BJ (cell line): ENCODE measurements at regions of chr11 and their contacts with region 1.

Region 1: DNA sequence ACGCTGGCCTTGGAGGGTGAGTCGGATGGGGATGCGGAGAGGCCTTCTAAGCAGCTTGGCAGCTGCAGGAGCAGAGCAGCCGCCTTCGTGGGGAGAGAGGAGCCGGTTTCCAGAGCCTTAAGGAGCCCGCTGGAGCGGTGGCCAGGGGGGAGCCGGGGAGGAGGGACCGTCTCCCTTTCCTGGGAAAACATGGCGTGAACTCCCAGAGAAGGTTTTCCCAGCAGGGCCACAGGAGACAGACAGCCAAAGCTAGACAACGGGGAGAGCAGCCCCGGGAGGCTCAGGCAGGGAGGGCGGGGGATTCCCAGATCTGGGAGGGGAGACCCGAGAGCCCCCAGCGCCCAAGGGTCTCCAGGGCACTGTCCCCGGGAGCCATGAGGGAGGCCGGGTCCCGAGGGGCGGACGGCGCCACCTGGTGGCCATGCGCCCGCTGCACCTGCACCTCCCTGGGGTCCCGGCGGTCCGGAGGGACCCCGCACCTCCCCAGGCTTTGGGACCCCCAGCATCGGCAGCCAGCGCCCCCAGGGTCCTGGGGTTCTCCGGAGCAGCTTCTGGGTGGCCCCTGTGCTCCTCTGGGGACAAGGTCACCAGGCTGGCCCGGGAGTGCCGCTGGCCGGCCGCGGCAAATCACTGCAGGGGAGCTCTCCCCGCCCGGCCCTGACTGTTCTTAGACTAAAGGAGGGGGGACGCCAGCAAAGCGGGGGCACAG is 2.4 kb upstream of the SYT8 start:
- DNase-seq: no peak
- H3K4me3 ChIP-seq: no peak overlapping the region
- H3K27me3 ChIP-seq: peaks cover 2% of the 10 kb centered on the region; the same call in 1 of the 2 replicates
- CTCF ChIP-seq: peak; percentile 95

Region 2: DNA sequence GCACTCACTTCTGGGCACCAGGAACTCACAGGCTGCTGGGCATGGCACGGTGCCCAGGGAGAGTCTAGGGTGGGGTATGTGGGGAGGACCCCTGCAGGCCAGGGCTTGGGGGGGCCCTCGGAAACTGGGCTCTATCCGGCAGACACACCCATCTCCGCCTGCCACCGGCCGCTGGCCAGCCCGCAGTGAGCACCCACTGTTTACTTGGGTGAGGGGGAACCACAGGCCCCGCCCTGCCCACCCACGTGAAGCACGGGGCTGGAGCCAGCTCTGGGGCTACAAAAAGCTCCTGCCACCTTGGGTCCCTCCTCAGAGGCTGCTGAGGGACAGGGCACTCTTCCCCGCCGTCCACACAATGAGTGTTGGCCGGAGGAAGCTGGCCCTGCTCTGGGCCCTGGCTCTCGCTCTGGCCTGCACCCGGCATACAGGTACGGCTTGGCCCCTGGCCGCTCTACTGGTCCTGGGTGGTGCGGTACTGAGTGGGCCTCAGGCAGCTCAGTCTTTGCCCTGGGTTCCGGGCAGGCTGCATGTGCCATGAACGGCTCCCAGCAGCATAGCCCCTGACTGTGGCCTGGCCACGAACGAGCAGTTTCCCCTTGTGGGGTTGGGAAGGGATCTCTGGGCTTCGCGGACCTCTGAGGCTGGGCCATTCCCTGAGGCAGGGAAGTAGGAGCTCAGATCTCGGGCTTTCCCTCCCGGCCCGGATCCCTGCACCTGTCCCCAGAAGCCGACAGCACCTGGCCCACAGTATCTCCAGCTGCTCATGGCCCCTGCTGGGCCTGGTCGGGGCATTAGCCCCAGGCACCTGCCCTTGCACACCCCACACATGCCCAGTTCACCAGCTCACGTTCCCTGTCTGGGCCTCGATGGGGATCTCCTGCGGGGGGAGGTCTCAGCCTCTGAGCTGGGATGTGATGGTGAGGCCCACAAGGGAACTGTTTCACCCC is 674.4 kb before region 1 on chr11 and contains the start of gene MUC5AC:
- CTCF ChIA-PET with region 1: no interaction called
- POLR2A ChIA-PET with region 1: no interaction called
- DNase-seq: no peak
- H3K4me3 ChIP-seq: no peak within 1 kb of the TSS
- H3K27me3 ChIP-seq: no peaks in the 10 kb centered on the region
- CTCF ChIP-seq: no peak
- polyA plus RNA-seq, gene MUC5AC: not detected in 2 replicates

Region 3: GRCh38 chr11:1619449-1619848 is 212.9 kb before region 1 on chr11:
- CTCF ChIA-PET with region 1: no interaction called
- POLR2A ChIA-PET with region 1: no interaction called
- DNase-seq: no peak
- H3K4me3 ChIP-seq: no peak overlapping the region
- H3K27me3 ChIP-seq: peaks cover 2% of the 10 kb centered on the region
- CTCF ChIP-seq: no peak

Region 4: GRCh38 chr11:1701091-1701807 is 131.1 kb before region 1 on chr11:
- CTCF ChIA-PET with region 1: interaction called, 76 read pairs
- POLR2A ChIA-PET with region 1: interaction called, 4 read pairs
- DNase-seq: no peak
- H3K4me3 ChIP-seq: no peak overlapping the region
- H3K27me3 ChIP-seq: peaks cover 8% of the 10 kb centered on the region
- CTCF ChIP-seq: no peak

Region 5: DNA sequence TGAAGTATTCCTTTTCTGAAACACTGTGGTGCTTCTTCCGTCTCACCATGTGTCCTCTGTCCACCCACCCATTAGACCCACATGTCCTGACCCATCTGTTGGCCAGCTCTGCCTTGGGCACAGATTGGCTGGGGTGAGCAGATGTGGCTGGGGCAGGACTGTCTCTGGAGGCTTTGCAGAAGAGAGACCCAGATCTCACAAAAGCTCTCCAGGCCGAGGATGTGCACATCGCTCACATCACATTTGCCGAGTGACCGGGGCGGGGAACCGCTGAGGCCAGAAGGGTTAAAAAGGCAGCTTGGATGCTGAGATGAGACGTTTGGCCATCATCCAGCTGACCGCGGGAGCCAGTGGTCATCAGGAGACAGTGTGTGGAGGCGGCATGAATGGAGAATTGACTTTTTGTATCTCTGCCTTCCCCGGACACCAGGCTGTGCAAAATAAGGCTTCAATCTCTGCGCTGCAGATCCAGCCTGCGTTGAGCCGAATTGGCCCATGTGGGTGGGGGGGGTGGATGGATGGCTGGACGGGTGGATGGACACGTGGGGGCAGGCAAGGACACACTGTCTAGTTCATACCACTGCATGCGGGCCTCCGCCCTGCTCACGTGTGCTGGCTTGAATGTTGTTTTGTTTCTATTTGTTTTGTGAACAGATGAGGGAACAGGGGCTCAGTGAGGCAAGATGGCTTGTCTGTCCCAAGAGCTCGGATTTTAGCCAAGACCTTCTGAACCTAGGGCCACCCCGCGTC is 88.1 kb before region 1 on chr11:
- CTCF ChIA-PET with region 1: interaction called, 14 read pairs
- POLR2A ChIA-PET with region 1: no interaction called
- DNase-seq: no peak
- H3K4me3 ChIP-seq: no peak overlapping the region
- H3K27me3 ChIP-seq: peaks cover 7% of the 10 kb centered on the region
- CTCF ChIP-seq: no peak

Region 6: DNA sequence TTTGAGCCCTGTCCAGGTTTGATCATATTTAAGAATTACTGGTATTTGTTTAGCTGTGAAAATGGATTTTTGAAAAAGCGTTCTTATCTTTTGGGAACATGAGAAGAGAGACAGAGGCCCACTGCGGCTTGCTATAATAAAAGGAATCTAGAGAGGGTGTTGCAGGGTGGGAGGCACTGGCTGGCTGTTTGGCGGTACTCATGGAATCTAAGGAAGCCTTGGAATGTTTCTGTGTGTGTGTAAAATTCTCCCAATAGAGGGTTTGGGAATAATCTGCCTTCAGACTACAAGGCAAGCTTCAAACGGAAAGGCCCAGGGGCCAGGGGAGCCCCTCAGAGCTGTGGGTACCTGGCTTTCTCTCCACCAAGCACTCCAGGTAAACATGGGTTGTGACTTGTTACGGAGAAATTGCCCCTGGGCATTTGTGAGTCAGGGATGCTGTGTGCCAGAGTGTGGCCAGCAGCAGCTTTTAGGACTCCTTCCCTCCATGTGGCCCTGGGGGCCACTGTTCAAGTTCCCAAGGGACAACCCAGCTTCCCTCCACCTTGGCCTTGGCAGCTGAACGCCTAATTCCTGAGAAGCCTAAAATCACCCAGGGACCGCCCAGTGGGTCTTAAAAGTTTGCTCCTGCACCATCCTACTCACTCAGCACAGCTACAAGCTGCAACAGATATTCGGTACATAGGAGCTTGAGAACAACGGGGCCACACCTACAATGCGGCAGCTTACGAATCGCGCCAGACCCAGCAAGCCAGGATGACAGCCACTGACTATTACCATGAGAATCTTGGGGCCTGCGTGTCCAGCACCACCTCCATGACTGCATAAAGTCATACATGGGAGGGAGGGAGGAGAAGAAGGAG is 11.7 kb before region 1 on chr11:
- CTCF ChIA-PET with region 1: interaction called, 23 read pairs
- POLR2A ChIA-PET with region 1: no interaction called
- DNase-seq: no peak
- H3K4me3 ChIP-seq: no peak overlapping the region
- H3K27me3 ChIP-seq: peaks cover 3% of the 10 kb centered on the region; the same call in 1 of the 2 replicates
- CTCF ChIP-seq: no peak

Region 7: GRCh38 chr11:1946812-1947484 is 114.6 kb after region 1 on chr11 and contains the start of gene MRPL23:
- CTCF ChIA-PET with region 1: interaction called, 30 read pairs
- POLR2A ChIA-PET with region 1: interaction called, 4 read pairs
- DNase-seq: no peak
- H3K4me3 ChIP-seq: no peak within 1 kb of the TSS
- H3K27me3 ChIP-seq: no peaks in the 10 kb centered on the region
- CTCF ChIP-seq: no peak
- polyA plus RNA-seq, gene MRPL23: 39.8 and 43.5 TPM in 2 replicates

Region 8: GRCh38 chr11:2725368-2726300 is 893.3 kb after region 1 on chr11:
- CTCF ChIA-PET with region 1: no interaction called
- POLR2A ChIA-PET with region 1: no interaction called
- DNase-seq: no peak
- H3K4me3 ChIP-seq: no peak overlapping the region
- H3K27me3 ChIP-seq: peaks cover 14% of the 10 kb centered on the region
- CTCF ChIP-seq: no peak